ENCODE measurements at regions of chr21 and their contacts with region 1.

Region 1: DNA sequence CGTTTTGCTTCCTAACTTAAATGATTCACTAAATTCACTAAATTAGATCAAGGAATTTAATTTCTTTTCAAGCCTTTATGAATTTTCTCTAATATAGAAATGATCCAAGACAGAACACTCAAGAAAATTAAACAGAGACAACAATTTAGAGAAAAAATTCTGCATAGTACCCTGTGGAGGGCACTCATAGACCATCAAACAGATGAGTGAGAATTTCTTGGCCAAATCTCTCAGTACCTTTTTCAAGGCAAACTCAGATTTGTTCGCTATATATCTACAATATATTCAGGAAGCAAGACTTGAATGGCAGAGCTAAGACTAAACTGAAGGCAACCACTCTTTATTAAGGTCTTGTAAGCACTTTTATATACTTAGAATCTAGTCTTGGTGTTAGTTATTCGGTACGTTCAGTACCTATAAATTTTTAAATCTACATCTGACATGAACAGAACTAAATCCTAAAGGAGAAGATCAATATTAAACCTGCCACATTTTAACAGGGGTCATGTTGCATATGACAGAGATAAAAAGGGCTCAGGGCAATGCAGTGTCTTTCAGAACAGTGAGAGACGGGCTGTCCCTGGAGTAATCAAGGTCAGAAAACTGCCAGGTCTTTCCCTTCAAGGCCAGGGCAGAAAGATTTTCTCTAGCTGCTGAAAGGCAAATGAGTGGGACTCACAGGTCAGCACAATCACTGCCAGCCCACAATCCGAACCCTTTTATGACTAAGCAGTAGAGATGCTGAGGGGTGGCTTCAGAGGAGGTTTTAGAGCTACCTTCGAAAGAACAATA is 118.8 kb upstream of the TMPRSS15 start:
- DNase-seq: peak; percentile 9
- ATAC-seq: no peak
- H3K4me3 ChIP-seq: no peak overlapping the region
- H3K27ac ChIP-seq: no peak overlapping the region
- H3K4me1 ChIP-seq: no peaks in the 10 kb centered on the region
- H3K27me3 ChIP-seq: no peaks in the 10 kb centered on the region
- CTCF ChIP-seq: peak; percentile 42; the same call in 1 of the 2 replicates

Region 2: DNA sequence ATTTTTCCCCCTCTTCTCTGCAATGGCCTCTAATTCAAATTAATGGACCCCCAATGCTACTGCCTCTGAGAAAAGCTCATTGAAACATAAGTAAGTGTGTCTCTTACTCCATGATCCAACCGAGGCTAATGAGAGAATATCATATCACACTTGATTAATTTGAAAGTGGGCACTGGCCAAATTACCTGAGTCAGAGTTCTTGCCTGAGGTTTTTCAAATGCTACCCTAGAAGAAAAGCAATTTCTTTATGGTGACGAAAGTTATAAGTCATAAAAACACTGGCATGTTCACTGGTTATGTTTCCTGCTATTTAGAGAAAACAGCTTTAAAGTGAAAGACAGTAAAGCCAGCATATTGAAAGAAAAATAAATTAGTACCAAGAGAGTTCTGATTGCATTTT is 250.0 kb after region 1 on chr21:
- CTCF ChIA-PET with region 1: no interaction called
- POLR2A ChIA-PET with region 1: no interaction called
- intact Hi-C with region 1: loop called (anchors 10 kb)
- DNase-seq: peak; percentile 69
- ATAC-seq: peak; percentile 45; the same call in 1 of the 2 replicates
- H3K4me3 ChIP-seq: peak overlapping the region; percentile 49; the same call in 1 of the 2 replicates
- H3K27ac ChIP-seq: peak overlapping the region; percentile 89
- H3K4me1 ChIP-seq: peaks cover 17% of the 10 kb centered on the region
- H3K27me3 ChIP-seq: no peaks in the 10 kb centered on the region
- CTCF ChIP-seq: no peak